ENCODE measurements at regions of chr1 and their contacts with region 1.

Region 1: GRCh38 chr1:181142096-181142958 is 53.8 kb downstream of the IER5 start:
- DNase-seq: peak; percentile 82 to 93 (median 90)
- H3K4me3 ChIP-seq: peak overlapping the region; percentile 22
- H3K27ac ChIP-seq: no peak overlapping the region
- H3K4me1 ChIP-seq: no peaks in the 10 kb centered on the region
- H3K27me3 ChIP-seq: no peaks in the 10 kb centered on the region
- CTCF ChIP-seq: peak; percentile 95 to 97 (median 96)
- EP300 ChIP-seq: no peak
- POLR2A ChIP-seq: no peak

Region 2: DNA sequence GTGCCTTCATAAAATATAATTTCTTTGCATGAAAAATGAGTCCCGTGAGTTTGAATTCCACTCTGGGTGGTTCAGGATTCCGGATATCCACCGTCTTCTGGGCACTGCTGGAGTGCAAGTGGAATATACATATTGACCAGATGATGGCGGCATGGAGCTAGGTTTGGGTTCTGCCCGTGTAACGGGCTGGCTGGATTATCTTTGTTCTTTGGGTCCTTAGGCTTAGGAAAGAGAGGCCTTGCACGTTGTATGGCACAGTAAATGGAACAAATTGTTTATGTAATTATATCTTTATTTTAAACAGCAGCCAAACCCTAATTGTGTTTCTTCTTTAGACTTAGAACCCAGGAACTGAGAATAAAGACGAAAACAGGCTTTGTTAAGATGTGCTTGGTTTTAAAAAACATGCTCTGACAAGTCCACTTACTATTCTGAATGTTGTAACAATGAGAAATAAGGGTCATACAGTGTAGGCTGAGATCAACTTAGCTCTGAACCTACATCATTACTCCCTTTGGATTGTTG is 626.4 kb before region 1 on chr1:
- intact Hi-C with region 1: loop called in 2 of 4 experiments (anchors 10 kb)
- DNase-seq: peak; percentile 55 to 74 (median 57)
- H3K4me3 ChIP-seq: no peak overlapping the region
- H3K27ac ChIP-seq: no peak overlapping the region
- H3K4me1 ChIP-seq: no peaks in the 10 kb centered on the region
- H3K27me3 ChIP-seq: no peaks in the 10 kb centered on the region
- CTCF ChIP-seq: peak; percentile 64 to 80 (median 73)
- EP300 ChIP-seq: no peak
- POLR2A ChIP-seq: no peak

Region 3: GRCh38 chr1:180617774-180618395 is 524.4 kb before region 1 on chr1:
- intact Hi-C with region 1: no loop called
- DNase-seq: no peak
- H3K4me3 ChIP-seq: no peak overlapping the region
- H3K27ac ChIP-seq: no peak overlapping the region
- H3K4me1 ChIP-seq: no peaks in the 10 kb centered on the region
- H3K27me3 ChIP-seq: no peaks in the 10 kb centered on the region
- CTCF ChIP-seq: no peak
- EP300 ChIP-seq: no peak
- POLR2A ChIP-seq: no peak

Region 4: DNA sequence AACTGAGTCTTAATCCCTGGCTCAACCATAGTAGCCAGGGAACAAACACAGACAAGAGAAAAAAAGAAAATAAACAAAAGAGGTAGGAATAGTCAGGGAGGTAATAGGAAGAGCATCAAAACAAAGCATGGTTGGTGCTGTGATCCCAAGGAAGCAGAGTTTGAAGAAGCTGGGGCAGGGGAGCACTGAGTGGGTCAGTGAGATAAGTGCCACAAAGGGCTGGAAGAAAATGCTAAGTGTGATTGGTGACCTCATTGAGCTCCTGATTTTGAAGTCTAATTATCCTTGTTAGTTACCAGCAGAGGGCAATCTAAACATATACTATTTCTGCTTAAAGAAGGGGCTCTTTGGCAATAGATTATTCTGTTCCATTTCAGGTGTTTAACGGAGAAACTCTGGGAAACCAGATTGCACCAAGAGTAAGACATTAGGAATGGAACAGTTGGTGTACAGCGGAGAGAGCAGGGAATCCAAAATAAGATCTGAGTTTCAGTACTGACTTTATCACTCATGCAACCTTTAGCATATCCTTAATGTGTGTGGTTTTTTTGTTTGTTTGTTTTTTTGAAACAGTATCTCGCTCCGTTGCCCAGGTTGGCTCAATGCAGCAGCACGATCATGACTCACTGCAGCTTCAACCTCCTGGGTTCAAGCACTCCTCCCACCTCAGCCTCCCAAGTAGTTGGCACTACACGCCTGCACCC is 260.4 kb before region 1 on chr1:
- intact Hi-C with region 1: loop called in 3 of 4 experiments (anchors 5 to 10 kb)
- DNase-seq: no peak
- H3K4me3 ChIP-seq: no peak overlapping the region
- H3K27ac ChIP-seq: no peak overlapping the region
- H3K4me1 ChIP-seq: no peaks in the 10 kb centered on the region
- H3K27me3 ChIP-seq: no peaks in the 10 kb centered on the region
- CTCF ChIP-seq: peak in 2 of 3 donors; percentile 64 to 69
- EP300 ChIP-seq: no peak
- POLR2A ChIP-seq: no peak

Region 5: GRCh38 chr1:181033799-181034451 is 108.4 kb before region 1 on chr1 and contains the start of gene MR1:
- intact Hi-C with region 1: loop called (anchors 2 to 10 kb)
- DNase-seq: peak in 2 of 5 donors; percentile 27 to 46
- H3K4me3 ChIP-seq: peak within 1 kb of the TSS; percentile 46
- H3K27ac ChIP-seq: peak within 1 kb of the TSS; percentile 26 to 85
- H3K4me1 ChIP-seq: peaks cover 11% of the 10 kb centered on the region
- H3K27me3 ChIP-seq: no peaks in the 10 kb centered on the region
- CTCF ChIP-seq: peak in 1 of 3 donors; percentile 13
- EP300 ChIP-seq: no peak
- POLR2A ChIP-seq: peak; percentile 54
- total RNA-seq, gene MR1: 7.4 to 21.5 (median 15.5) TPM

Region 6: DNA sequence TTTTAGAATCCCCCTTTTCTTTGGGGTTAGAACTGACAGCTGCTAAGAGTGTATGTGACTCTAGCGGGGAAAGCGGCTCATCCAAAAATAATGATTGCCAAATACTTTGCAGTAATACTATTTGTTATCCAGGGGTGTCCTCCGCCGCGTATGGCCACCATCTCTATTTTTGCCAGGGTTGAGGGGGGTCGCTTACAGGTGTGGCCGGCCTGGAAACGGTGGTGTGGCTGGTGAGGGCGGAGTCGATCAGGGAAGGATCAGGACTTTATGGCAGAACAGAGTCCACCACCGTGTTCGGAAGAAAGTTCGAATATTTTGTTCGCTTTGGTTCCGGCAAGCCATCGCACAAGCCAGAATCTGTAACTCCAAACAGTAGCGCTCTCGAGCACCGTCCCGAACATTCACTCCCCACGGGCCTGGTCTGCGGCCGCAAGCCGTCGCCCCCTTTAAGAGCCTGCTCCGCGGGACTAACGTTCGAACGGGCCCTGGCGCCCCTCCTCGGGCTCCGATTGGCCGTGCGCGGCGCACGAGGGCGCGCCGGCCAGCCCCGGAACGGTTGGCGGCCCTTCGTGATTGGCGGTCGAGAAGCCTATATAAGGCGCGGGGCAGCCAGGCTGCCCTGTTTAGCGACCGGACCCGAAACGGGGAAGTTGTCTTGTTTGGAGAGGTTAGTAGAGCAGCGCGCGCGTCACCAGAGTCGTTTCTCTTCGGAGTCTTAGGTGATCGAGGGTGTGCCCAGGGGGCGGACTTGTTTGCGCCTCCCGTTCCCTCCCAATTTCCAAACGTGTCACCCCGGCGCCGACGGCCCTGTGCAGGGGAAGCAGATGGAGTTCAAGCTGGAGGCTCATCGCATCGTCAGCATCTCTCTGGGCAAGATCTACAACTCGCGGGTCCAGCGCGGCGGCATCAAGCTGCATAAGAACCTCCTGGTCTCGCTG is 54.0 kb before region 1 on chr1 and contains the start of gene IER5:
- intact Hi-C with region 1: loop called in 3 of 4 experiments (anchors 5 kb)
- DNase-seq: peak; percentile 94 to 97 (median 95)
- H3K4me3 ChIP-seq: peak within 1 kb of the TSS; percentile 74
- H3K27ac ChIP-seq: peak within 1 kb of the TSS; percentile 53 to 66
- H3K4me1 ChIP-seq: no peaks in the 10 kb centered on the region
- H3K27me3 ChIP-seq: no peaks in the 10 kb centered on the region
- CTCF ChIP-seq: no peak
- EP300 ChIP-seq: no peak
- POLR2A ChIP-seq: peak; percentile 98
- total RNA-seq, gene IER5: 2.7 to 43.4 (median 6.8) TPM

Region 7: DNA sequence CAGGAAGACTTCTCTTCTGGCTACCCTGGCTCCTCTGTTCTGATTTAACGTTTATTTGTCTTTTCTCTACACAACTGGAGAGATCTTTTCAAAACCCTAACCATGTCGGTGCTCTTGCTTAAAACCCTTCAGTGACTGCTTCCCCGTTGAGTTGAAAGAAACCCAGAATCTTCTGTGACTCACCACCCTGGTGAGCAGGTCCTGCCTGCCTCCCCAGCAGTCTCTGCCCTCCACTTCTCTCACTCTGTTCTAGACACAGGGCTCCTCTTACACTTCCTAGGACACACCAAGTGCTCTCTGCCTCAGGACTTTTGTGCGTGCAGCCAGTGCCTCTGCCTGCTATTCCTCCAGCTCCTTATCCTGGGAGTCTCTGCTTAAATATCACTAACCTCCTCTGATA is 77.6 kb after region 1 on chr1:
- intact Hi-C with region 1: no loop called
- DNase-seq: no peak
- H3K4me3 ChIP-seq: no peak overlapping the region
- H3K27ac ChIP-seq: no peak overlapping the region
- H3K4me1 ChIP-seq: no peaks in the 10 kb centered on the region
- H3K27me3 ChIP-seq: no peaks in the 10 kb centered on the region
- CTCF ChIP-seq: no peak
- EP300 ChIP-seq: no peak
- POLR2A ChIP-seq: no peak

Region 8: GRCh38 chr1:181416268-181416860 is 274.0 kb after region 1 on chr1:
- intact Hi-C with region 1: no loop called
- DNase-seq: no peak
- H3K4me3 ChIP-seq: no peak overlapping the region
- H3K27ac ChIP-seq: no peak overlapping the region
- H3K4me1 ChIP-seq: no peaks in the 10 kb centered on the region
- H3K27me3 ChIP-seq: no peaks in the 10 kb centered on the region
- CTCF ChIP-seq: no peak
- EP300 ChIP-seq: no peak
- POLR2A ChIP-seq: no peak

Measured in ovary (tissue), 10 donors.